GM10248 (cell line): ENCODE measurements at regions of chr7 and their contacts with region 1.

Region 1: GRCh38 chr7:157141525-157142060 is 2.9 kb downstream of the UBE3C start:
- DNase-seq: no peak
- CTCF ChIP-seq: no peak

Region 2: DNA sequence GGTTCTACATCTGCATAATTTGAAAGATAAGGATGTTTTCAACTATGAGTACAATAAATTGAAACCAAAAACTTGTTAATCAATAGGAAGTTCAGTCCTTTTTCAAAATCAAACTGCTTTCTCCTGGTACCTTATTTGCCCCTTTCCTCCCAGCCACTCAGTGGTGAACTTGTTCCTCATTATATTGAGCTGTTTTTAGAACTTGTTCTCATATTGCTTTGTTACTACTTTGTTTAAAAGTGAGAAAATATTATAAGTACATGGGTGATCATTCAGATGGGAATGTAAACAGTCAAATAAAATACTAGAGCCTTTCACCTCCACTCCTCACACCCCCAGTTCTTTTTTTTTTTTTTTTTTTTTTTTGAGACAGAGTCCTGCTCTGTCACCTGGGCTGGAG is 14.4 kb after region 1 on chr7:
- CTCF ChIA-PET with region 1: interaction called, 10 read pairs
- POLR2A ChIA-PET with region 1: no interaction called
- DNase-seq: no peak
- CTCF ChIP-seq: no peak